ENCODE measurements at regions of chr17 and their contacts with region 1.

Region 1: GRCh38 chr17:65656382-65657250 is 95.2 kb upstream of the AXIN2 start:
- DNase-seq: no peak
- H3K4me3 ChIP-seq: no peak overlapping the region
- H3K27ac ChIP-seq: no peak overlapping the region
- H3K4me1 ChIP-seq: no peaks in the 10 kb centered on the region
- H3K27me3 ChIP-seq: no peaks in the 10 kb centered on the region
- CTCF ChIP-seq: no peak
- EP300 ChIP-seq: no peak
- POLR2A ChIP-seq: no peak

Region 2: GRCh38 chr17:64448665-64449512 is 1207.7 kb before region 1 on chr17 and contains the start of gene MILR1:
- intact Hi-C with region 1: loop called in 1 of 4 experiments (anchors 10 kb)
- DNase-seq: peak in 2 of 5 donors; percentile 13 to 51
- H3K4me3 ChIP-seq: no peak within 1 kb of the TSS
- H3K27ac ChIP-seq: no peak within 1 kb of the TSS
- H3K4me1 ChIP-seq: no peaks in the 10 kb centered on the region
- H3K27me3 ChIP-seq: no peaks in the 10 kb centered on the region
- CTCF ChIP-seq: no peak
- EP300 ChIP-seq: peak; percentile 27
- POLR2A ChIP-seq: no peak
- total RNA-seq, gene MILR1: 2.3 to 16.4 (median 6.8) TPM

Region 3: DNA sequence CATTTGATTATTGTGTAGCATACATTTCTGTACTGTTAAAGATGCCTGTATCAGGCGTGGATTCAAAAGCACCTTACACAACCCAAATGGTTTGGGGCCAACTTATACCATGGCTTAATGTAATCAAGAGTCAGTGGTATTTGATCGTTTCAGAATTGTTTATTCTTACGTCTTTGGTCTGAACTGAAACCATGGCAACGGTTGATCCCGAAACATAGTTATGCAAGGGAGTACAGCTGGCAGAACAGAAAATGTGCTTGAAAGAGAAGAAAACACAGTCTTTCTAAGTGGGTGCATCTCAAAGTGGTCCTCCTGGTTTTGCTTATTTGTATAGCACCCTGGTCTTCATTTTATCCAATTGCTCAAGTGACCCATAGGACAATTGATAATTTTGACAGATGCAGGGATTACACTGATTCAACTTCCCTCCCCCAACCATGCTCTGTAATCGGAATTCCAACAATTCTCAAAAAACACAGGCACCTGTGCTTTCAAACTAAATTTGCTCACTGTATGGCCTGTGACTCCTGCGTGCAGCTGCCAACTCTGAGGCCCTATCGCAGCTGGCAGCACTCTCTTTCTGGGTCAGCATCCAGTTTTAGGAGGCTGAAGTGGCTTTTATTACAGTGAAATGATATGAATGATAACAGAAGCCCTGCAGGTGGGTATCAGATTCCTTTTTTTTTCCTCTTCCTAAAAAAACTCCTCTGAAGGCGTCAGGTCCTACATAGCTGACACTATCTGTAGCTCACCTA is 18.2 kb before region 1 on chr17:
- intact Hi-C with region 1: no loop called
- DNase-seq: peak in 1 of 5 donors; percentile 38
- H3K4me3 ChIP-seq: no peak overlapping the region
- H3K27ac ChIP-seq: no peak overlapping the region
- H3K4me1 ChIP-seq: no peaks in the 10 kb centered on the region
- H3K27me3 ChIP-seq: no peaks in the 10 kb centered on the region
- CTCF ChIP-seq: no peak
- EP300 ChIP-seq: no peak
- POLR2A ChIP-seq: no peak

Measured in ovary (tissue), 10 donors.